ENCODE measurements at regions of chr13 and their contacts with region 1.

Region 1: DNA sequence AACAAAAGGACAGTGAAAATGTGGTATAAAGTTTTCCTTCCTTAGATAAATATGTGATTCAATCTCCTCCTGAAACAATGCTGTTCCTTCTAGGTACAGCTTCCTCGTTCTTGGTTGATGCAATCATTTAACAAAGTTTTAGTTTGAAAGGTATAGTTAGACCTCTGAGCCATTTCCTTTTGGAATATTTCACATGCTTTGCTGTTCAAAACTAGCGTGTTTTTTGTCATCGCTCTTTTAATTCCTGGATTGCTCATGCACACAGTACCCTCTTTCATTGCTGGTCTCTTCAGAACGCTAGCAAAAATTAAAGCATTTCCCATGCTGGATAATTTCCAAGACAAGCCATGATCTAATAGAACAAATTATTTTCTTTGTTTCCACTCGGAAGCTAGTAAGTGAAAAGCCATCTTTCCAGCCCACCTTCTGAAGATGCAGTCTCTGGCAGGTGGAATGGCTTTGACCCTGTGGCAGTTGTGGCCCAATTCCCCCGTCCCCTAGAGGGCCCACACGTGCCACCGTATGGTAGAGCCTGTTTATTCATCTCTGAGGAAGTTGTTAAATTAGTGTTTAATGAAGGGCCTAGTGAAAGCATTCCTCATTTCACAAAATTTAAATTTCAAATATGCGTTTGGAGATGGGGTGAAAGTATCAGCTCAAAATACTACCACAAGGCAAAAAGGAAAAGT is 1040.6 kb upstream of the SLC10A2 start:
- DNase-seq: peak; percentile 91
- H3K4me3 ChIP-seq: no peak overlapping the region
- H3K27ac ChIP-seq: peak overlapping the region; percentile 98
- H3K4me1 ChIP-seq: peaks cover 27% of the 10 kb centered on the region
- H3K27me3 ChIP-seq: no peaks in the 10 kb centered on the region
- CTCF ChIP-seq: peak; percentile 3 to 19
- POLR2A ChIP-seq: no peak

Region 2: DNA sequence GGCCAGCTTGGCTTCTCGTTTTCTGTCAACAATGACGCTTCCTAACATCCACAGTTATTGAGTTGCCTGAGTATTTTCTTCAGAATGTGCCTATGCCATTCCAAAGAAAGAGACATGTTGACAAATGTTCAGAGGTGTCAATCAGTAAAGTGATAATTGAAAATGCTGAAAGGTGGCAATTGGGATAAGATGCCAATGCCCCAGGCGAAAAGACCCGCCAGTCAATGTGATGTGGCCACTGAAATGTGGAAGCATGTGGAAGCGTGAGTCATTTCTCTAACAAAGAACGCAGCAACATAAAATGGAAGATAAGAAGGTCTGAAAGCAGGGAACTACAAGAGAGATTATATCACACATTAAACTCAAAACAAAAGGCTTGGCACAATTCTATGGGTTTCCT is 158.4 kb before region 1 on chr13:
- CTCF ChIA-PET with region 1: no interaction called
- POLR2A ChIA-PET with region 1: no interaction called
- dilution Hi-C with region 1: no loop called
- intact Hi-C with region 1: loop called (anchors 1 kb)
- DNase-seq: peak; percentile 92
- H3K4me3 ChIP-seq: no peak overlapping the region
- H3K27ac ChIP-seq: peak overlapping the region; percentile 84
- H3K4me1 ChIP-seq: peaks cover 48% of the 10 kb centered on the region
- H3K27me3 ChIP-seq: no peaks in the 10 kb centered on the region
- CTCF ChIP-seq: no peak
- POLR2A ChIP-seq: peak; percentile 38

Region 3: GRCh38 chr13:104015646-104016396 is 91.0 kb before region 1 on chr13:
- CTCF ChIA-PET with region 1: no interaction called
- POLR2A ChIA-PET with region 1: no interaction called
- dilution Hi-C with region 1: no loop called
- intact Hi-C with region 1: loop called (anchors 1 kb)
- DNase-seq: peak; percentile 89
- H3K4me3 ChIP-seq: no peak overlapping the region
- H3K27ac ChIP-seq: peak overlapping the region; percentile 74
- H3K4me1 ChIP-seq: peaks cover 23% of the 10 kb centered on the region
- H3K27me3 ChIP-seq: no peaks in the 10 kb centered on the region
- CTCF ChIP-seq: no peak
- POLR2A ChIP-seq: no peak

Region 4: DNA sequence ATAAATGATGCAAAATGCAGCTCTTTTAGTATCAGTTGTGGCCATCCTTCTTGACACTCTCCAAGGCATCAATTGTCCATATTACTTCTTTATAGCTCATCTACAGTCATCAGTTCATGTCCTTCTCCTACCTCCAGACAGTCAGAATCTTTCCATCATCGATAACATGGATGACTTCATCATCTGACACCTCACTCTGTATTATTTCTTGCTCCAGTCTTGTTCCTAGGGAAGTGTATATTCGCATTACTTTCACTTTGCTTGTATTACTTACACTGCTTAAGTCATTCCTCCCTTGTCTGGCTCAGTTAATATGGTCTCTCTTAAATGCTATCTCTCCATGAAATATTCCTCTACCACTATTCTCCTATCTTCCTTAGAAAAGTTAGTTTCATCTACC is 41.5 kb before region 1 on chr13:
- CTCF ChIA-PET with region 1: no interaction called
- POLR2A ChIA-PET with region 1: no interaction called
- dilution Hi-C with region 1: no loop called
- intact Hi-C with region 1: no loop called
- DNase-seq: no peak
- H3K4me3 ChIP-seq: no peak overlapping the region
- H3K27ac ChIP-seq: no peak overlapping the region
- H3K4me1 ChIP-seq: no peaks in the 10 kb centered on the region
- H3K27me3 ChIP-seq: no peaks in the 10 kb centered on the region
- CTCF ChIP-seq: no peak
- POLR2A ChIP-seq: no peak

Region 5: GRCh38 chr13:104256701-104257100 is 149.9 kb after region 1 on chr13:
- CTCF ChIA-PET with region 1: no interaction called
- POLR2A ChIA-PET with region 1: no interaction called
- dilution Hi-C with region 1: no loop called
- intact Hi-C with region 1: no loop called
- DNase-seq: no peak
- H3K4me3 ChIP-seq: no peak overlapping the region
- H3K27ac ChIP-seq: no peak overlapping the region
- H3K4me1 ChIP-seq: peaks cover 3% of the 10 kb centered on the region
- H3K27me3 ChIP-seq: no peaks in the 10 kb centered on the region
- CTCF ChIP-seq: no peak
- POLR2A ChIP-seq: no peak

Region 6: GRCh38 chr13:104318121-104318520 is 211.3 kb after region 1 on chr13:
- CTCF ChIA-PET with region 1: no interaction called
- POLR2A ChIA-PET with region 1: no interaction called
- dilution Hi-C with region 1: no loop called
- intact Hi-C with region 1: loop called (anchors 1 kb)
- DNase-seq: peak; percentile 43
- H3K4me3 ChIP-seq: no peak overlapping the region
- H3K27ac ChIP-seq: no peak overlapping the region
- H3K4me1 ChIP-seq: peaks cover 14% of the 10 kb centered on the region
- H3K27me3 ChIP-seq: no peaks in the 10 kb centered on the region
- CTCF ChIP-seq: peak; percentile 27 to 38
- POLR2A ChIP-seq: no peak

Region 7: GRCh38 chr13:104385404-104385803 is 278.6 kb after region 1 on chr13:
- CTCF ChIA-PET with region 1: no interaction called
- POLR2A ChIA-PET with region 1: no interaction called
- dilution Hi-C with region 1: no loop called
- intact Hi-C with region 1: no loop called
- DNase-seq: no peak
- H3K4me3 ChIP-seq: no peak overlapping the region
- H3K27ac ChIP-seq: no peak overlapping the region
- H3K4me1 ChIP-seq: no peaks in the 10 kb centered on the region
- H3K27me3 ChIP-seq: no peaks in the 10 kb centered on the region
- CTCF ChIP-seq: no peak
- POLR2A ChIP-seq: no peak

Region 8: DNA sequence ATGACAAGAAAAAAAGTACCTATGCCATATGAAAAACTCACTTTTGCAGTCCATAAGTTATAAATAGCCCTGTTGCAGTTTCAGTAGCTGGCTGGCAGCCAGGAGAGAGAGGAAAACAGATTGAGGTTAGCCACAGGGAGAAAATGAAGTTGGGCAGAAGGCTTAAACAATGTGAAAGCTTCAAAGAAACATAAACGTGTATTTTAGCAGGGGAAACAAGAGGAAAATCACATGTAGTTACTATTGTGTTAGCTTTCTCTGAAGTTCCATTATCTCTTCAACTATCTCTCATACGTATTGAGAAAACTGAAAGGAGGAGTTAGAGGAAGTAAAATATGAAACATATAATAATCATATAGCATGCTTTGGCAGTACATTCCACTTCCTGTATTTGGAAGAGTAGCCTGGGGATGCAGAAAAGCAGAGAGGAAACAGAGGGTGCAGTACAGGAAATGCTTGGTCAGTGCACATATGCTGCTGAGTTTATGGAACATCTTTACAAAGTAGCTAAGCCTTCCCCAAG is 877.5 kb after region 1 on chr13:
- CTCF ChIA-PET with region 1: no interaction called
- POLR2A ChIA-PET with region 1: no interaction called
- dilution Hi-C with region 1: no loop called
- intact Hi-C with region 1: loop called (anchors 10 kb)
- DNase-seq: peak; percentile 92
- H3K4me3 ChIP-seq: peak overlapping the region in 1 of 3 experiments; percentile 25
- H3K27ac ChIP-seq: peak overlapping the region; percentile 78
- H3K4me1 ChIP-seq: peaks cover 26% of the 10 kb centered on the region
- H3K27me3 ChIP-seq: no peaks in the 10 kb centered on the region
- CTCF ChIP-seq: no peak
- POLR2A ChIP-seq: no peak

Region 9: DNA sequence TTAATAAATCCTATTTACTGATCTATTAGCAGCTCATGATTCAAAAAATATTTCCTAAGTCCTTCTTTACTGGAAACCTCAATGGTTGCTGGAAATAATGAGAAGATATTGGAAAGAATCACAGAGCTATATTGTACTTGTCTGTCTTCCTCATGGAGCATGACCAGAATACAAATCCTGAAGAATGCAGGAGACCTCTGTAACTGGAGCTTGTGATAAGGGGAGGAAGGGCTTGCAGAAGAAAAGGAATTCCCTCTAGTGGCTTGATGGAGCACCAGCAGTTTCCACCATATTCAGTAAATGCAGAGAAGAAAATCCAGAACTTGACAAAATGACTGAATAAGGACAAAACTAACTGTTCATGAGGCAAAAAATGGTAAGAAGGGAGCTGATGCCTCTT is 1095.5 kb after region 1 on chr13:
- CTCF ChIA-PET with region 1: no interaction called
- POLR2A ChIA-PET with region 1: no interaction called
- dilution Hi-C with region 1: no loop called
- intact Hi-C with region 1: loop called (anchors 1 kb)
- DNase-seq: peak; percentile 69
- H3K4me3 ChIP-seq: no peak overlapping the region
- H3K27ac ChIP-seq: no peak overlapping the region
- H3K4me1 ChIP-seq: no peaks in the 10 kb centered on the region
- H3K27me3 ChIP-seq: no peaks in the 10 kb centered on the region
- CTCF ChIP-seq: peak; percentile 51 to 70
- POLR2A ChIP-seq: no peak

Measured in endothelial cell of umbilical vein (primary cell).